RWPE1 (cell line): ENCODE measurements at regions of chr19 and their contacts with region 1.

Region 1: GRCh38 chr19:42450314-42450934 is 7.7 kb upstream of the CXCL17 start:
- DNase-seq: peak; percentile 78
- H3K27ac ChIP-seq: no peak overlapping the region
- CTCF ChIP-seq: peak; percentile 90

Region 2: GRCh38 chr19:42529248-42529764 is 78.9 kb after region 1 on chr19:
- CTCF ChIA-PET with region 1: interaction called, 19 read pairs
- POLR2A ChIA-PET with region 1: no interaction called
- DNase-seq: peak; percentile 53
- H3K27ac ChIP-seq: no peak overlapping the region; the same call in 1 of the 2 replicates
- CTCF ChIP-seq: peak; percentile 64

Region 3: DNA sequence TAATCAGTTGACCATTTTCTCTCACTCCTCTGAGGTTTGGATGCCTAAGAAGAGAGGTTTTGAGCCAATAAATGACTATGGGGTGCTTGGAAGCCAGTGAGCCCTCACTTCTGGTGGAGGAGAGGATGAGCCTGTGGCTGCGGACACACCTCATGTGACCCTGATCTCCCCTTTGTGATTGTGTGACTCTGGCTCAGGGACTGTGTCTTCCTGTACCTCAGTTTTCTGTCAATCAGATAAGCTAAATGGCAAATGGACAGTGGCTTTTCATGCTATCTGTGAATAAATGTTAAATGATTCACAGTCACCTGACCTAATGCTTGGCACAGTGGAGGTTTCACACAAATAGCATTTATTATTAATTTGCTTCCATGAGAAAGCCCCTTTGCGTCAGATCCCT is 312.4 kb after region 1 on chr19:
- CTCF ChIA-PET with region 1: no interaction called
- POLR2A ChIA-PET with region 1: no interaction called
- DNase-seq: no peak
- H3K27ac ChIP-seq: peak overlapping the region; percentile 70; the same call in 1 of the 2 replicates
- CTCF ChIP-seq: no peak